ENCODE measurements at regions of chr3 and their contacts with region 1.

Region 1: DNA sequence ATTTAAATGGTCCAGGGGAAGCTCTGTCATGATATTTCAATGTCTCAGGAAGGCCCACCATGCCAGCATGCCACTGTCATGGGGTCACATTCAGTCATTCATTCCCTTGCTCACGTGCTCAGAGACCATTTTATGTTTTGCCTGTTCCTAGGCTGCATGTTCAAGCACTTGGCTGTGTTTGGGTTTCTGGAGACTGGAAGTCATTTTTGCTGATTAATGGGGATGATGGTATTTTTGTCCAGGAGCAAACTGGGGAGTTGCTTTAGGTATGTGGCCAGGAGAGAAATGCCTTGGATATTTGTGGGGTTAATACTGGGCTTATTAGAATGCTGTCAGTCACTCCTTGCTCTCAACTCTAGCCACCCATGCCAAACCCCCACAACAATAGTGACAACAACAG is 303.5 kb downstream of the PTPRG start:
- DNase-seq: no peak
- ATAC-seq: no peak
- H3K4me3 Mint-ChIP-seq: no peak overlapping the region
- H3K27ac Mint-ChIP-seq: no peak overlapping the region
- H3K4me1 Mint-ChIP-seq: no peaks in the 10 kb centered on the region
- H3K27me3 Mint-ChIP-seq: no peaks in the 10 kb centered on the region
- CTCF ChIP-seq: no peak

Region 2: DNA sequence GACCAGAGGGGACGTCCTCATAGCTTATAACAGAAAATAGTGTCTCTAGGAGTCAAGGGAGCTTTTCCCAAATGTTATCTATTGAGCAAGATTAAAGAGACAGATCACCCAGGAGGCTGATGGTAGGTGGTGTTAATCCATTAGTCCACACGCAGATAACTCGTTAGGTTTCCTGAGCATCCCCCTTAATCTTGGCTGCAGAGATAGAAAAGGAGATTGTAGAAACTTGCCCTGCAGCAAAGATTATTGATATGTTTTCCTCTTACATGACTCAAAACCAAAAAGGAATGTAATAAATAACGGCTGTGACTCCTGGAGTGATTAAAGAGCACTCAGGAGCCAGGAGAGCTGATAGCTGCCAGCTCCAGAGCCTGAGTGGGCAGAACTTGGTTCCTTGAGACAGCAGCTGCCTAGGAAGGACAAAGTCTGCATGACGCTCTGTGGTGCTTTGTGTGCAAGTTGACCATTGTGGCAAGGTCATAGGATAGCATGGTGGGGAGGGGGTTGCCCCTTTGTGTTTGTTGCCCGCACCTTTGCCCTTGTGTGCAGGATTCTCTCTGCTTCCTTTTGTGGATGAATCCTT is 68.7 kb before region 1 on chr3:
- CTCF ChIA-PET with region 1: no interaction called
- POLR2A ChIA-PET with region 1: no interaction called
- intact Hi-C with region 1: no loop called
- DNase-seq: no peak
- ATAC-seq: no peak
- H3K4me3 Mint-ChIP-seq: no peak overlapping the region
- H3K27ac Mint-ChIP-seq: no peak overlapping the region
- H3K4me1 Mint-ChIP-seq: no peaks in the 10 kb centered on the region
- H3K27me3 Mint-ChIP-seq: no peaks in the 10 kb centered on the region
- CTCF ChIP-seq: no peak

Region 3: DNA sequence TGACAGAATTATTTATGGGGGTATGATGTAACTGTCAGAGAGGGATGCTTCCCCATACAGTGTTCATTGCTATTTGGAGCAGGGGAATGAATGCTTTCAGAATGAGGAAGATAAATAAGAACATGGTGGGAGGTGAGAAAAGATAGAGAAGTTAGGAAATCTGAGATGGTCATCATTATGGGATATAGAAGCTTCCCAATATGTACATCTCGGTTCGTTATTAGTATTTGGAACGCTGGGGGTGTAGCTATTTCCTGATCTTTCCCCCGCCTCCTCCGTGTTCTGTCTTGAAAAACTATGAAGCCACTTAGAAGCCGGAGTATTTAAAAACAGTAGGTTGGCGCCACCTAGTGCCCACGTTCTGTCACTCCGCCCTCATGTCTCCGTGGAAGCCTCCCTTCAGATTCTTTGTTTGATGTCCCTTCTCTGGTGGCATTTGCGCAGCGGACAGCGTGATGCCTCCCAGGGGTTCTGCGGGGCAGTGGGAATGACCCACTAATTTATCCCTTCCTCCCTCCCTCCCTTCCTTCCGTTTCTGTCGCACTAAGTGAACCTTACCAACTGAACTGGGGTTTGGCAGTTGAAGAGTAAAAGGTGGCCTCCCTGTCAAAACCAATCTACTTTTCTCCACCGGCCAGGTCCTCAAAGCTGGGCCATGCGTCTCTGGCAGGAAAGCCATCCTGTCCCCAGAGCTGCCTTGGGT is 323.9 kb after region 1 on chr3:
- CTCF ChIA-PET with region 1: no interaction called
- POLR2A ChIA-PET with region 1: no interaction called
- intact Hi-C with region 1: loop called (anchors 10 kb)
- DNase-seq: peak; percentile 82
- ATAC-seq: peak; percentile 60
- H3K4me3 Mint-ChIP-seq: no peak overlapping the region
- H3K27ac Mint-ChIP-seq: no peak overlapping the region
- H3K4me1 Mint-ChIP-seq: peaks cover 4% of the 10 kb centered on the region
- H3K27me3 Mint-ChIP-seq: peaks cover 2% of the 10 kb centered on the region
- CTCF ChIP-seq: peak; percentile 73

Measured in activated CD8-positive, alpha-beta T cell treated with anti-CD3 and anti-CD28 coated beads for 36 hours (primary cell).